RWPE1 (cell line): ENCODE measurements at regions of chr9 and their contacts with region 1.

Region 1: GRCh38 chr9:133782157-133783130 is 44.3 kb upstream of the SARDH start:
- DNase-seq: peak; percentile 73
- H3K27ac ChIP-seq: peak overlapping the region; percentile 63
- CTCF ChIP-seq: peak; percentile 95

Region 2: DNA sequence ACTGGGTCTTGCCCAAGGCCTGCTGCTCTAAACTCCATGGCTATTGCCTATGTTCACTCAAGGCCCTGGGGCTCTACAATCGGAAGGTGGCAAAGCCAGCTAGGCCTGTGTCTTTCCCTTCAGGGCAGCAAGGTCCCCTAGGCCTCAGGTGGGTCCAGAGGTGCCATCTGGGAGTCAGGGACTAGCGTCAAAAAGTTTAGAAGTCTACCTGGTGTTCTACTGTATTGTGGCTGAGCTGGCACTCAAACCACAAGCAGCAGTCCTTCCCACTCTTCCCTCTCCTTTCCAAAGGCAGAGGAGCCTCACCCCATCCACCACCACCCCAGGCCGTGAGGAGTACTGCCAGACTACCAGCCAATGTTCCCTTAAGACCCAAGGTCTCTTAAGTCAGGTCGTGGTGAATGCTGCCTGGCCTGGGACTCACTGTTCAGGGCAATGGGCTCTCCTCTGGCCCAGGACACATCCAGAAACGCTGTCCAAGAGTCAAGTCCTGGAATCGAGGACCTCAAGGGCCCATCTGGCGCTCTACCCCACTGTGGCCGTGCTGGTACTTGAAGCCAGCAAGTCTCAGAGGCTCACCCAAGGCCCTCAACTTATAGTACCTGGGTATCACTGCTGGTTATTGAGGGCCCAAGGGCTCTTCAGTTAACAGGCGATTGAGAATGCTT is 31.3 kb before region 1 on chr9:
- CTCF ChIA-PET with region 1: no interaction called
- POLR2A ChIA-PET with region 1: no interaction called
- DNase-seq: no peak
- H3K27ac ChIP-seq: no peak overlapping the region
- CTCF ChIP-seq: no peak

Region 3: GRCh38 chr9:133768859-133769425 is 13.5 kb before region 1 on chr9:
- CTCF ChIA-PET with region 1: interaction called, 15 read pairs
- POLR2A ChIA-PET with region 1: no interaction called
- DNase-seq: no peak
- H3K27ac ChIP-seq: peak overlapping the region; percentile 2; the same call in 1 of the 2 replicates
- CTCF ChIP-seq: no peak